Activated CD4-positive, alpha-beta memory T cell treated with anti-CD3 and anti-CD28 coated beads, Interleukin-2, amount 10 ng/mL, durations not matched to agents 7 days and 5 days (primary cell): ENCODE measurements at regions of chr3 and their contacts with region 1.

Region 1: GRCh38 chr3:119676771-119677640 is at the start of gene COX17:
- DNase-seq: peak; percentile 97
- H3K4me3 Mint-ChIP-seq: peak within 1 kb of the TSS; percentile 74
- H3K27ac Mint-ChIP-seq: peak within 1 kb of the TSS; percentile 92
- H3K4me1 Mint-ChIP-seq: peaks cover 29% of the 10 kb centered on the region
- H3K27me3 Mint-ChIP-seq: no peaks in the 10 kb centered on the region
- total RNA-seq, gene COX17: 63.7 to 69.8 TPM

Region 2: GRCh38 chr3:119240591-119241434 is 436.2 kb before region 1 on chr3 and contains the start of gene B4GALT4:
- CTCF ChIA-PET with region 1: interaction called, 15 read pairs
- POLR2A ChIA-PET with region 1: interaction called, 3 read pairs
- DNase-seq: peak; percentile 79
- H3K4me3 Mint-ChIP-seq: peak within 1 kb of the TSS; percentile 79
- H3K27ac Mint-ChIP-seq: peak within 1 kb of the TSS; percentile 78
- H3K4me1 Mint-ChIP-seq: peaks cover 40% of the 10 kb centered on the region
- H3K27me3 Mint-ChIP-seq: no peaks in the 10 kb centered on the region
- total RNA-seq, gene B4GALT4: 10.9 to 11.6 TPM

Region 3: DNA sequence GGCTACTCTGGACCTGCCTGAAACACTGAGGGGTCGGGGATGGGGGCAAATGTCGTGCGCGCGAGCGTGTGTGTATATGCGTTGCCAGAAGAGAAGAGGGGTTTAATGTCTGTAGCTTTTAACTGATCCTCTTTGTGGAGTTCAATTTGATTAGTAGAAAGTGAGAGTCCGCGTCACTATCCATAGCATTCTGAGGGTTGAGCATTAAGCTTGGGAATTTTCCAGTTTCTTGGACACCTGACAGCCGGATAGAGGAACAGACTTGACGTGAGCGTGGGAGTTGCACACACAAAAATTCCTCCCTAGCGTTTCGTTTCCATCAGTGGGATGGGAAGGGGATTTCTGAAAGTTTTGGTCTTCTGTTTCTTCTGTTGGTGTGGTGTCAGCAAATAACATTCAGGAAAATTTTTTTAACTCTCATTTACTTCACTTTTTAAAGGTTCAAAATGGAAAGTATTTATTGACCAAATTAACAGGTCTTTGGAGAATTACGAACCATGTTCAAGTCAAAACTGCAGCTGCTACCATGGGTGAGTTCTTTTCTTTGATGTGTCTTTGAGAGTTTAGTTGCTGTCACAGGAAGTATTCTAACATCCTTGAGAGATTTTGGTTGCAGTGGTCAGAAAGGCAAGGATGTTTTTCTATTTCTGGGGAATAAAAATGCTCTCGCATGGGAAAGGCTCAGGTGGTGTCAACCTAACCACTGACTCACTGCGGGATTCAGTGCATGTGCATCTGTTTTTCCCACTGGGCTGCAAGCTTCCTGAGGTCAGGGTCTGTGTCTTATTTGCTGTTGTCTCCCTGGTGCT is 207.4 kb before region 1 on chr3:
- CTCF ChIA-PET with region 1: interaction called, 5 read pairs
- POLR2A ChIA-PET with region 1: interaction called, 13 read pairs
- DNase-seq: no peak
- H3K4me3 Mint-ChIP-seq: peak overlapping the region; percentile 95
- H3K27ac Mint-ChIP-seq: peak overlapping the region; percentile 71
- H3K4me1 Mint-ChIP-seq: peaks cover 38% of the 10 kb centered on the region
- H3K27me3 Mint-ChIP-seq: no peaks in the 10 kb centered on the region

Region 4: GRCh38 chr3:119600732-119601131 is 76.3 kb before region 1 on chr3:
- CTCF ChIA-PET with region 1: interaction called, 19 read pairs
- POLR2A ChIA-PET with region 1: interaction called, 14 read pairs
- DNase-seq: peak; percentile 60
- H3K4me3 Mint-ChIP-seq: no peak overlapping the region
- H3K27ac Mint-ChIP-seq: peak overlapping the region; percentile 62
- H3K4me1 Mint-ChIP-seq: peaks cover 56% of the 10 kb centered on the region
- H3K27me3 Mint-ChIP-seq: no peaks in the 10 kb centered on the region

Region 5: DNA sequence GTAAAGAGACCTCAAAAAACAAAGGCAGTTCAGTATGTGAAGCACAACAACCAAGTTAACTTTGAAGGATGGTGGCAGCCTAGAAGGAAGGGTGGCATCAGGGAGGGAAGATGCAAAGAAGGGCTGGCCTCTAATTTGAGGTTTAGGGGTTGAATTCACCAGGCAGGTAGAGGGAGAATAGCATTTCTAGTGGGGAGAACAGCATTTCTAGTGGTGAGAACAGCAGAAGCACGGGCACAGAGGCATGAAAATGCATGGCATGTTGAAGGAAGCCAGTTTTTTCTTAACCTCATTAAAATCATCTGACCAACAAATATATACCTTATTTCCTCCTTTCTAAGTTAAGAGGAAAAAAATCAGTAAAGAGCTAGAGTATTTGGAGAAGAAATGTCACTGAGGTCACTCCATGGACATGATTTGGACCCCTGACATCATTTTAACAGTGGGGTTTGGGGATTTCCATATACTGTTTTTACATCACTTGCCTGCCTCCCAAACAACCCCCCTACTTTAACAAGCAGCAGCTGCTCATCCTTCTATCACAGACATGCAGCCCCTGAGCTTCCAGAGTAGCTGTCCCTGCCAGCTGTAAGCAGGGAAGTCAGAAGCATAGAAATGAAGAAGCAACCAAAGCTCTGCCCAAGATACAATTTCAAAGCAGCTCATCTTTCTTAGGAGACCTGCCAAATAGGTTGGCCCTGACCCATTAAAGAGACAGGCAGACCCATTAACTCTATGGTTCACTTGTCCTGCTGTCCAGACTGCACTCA is 14.2 kb before region 1 on chr3:
- CTCF ChIA-PET with region 1: interaction called, 4 read pairs
- POLR2A ChIA-PET with region 1: interaction called, 19 read pairs
- DNase-seq: no peak
- H3K4me3 Mint-ChIP-seq: no peak overlapping the region
- H3K27ac Mint-ChIP-seq: no peak overlapping the region
- H3K4me1 Mint-ChIP-seq: peaks cover 18% of the 10 kb centered on the region
- H3K27me3 Mint-ChIP-seq: no peaks in the 10 kb centered on the region

Region 6: DNA sequence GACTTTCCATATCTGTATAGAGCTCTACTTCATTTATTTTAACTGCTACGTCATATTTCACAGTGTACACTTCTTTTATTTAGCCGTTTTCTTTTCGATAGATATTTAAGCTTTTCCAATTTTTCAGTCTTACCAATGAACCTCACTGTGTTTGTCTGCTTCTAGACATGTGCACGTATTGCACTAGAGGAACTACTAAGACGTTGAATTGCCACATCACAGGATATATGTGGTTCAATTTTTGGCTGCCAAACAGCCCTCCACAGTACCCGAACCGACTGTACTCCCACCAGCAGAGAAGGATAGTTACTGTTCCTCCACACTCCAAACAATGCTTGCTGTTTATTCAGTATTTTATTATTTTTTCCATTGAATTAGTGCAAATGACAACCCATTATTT is 106.9 kb after region 1 on chr3:
- CTCF ChIA-PET with region 1: no interaction called
- POLR2A ChIA-PET with region 1: no interaction called
- DNase-seq: no peak
- H3K4me3 Mint-ChIP-seq: no peak overlapping the region
- H3K27ac Mint-ChIP-seq: no peak overlapping the region
- H3K4me1 Mint-ChIP-seq: peaks cover 4% of the 10 kb centered on the region
- H3K27me3 Mint-ChIP-seq: no peaks in the 10 kb centered on the region